ENCODE measurements at regions of chr2 and their contacts with region 1.

Region 1: GRCh38 chr2:108069515-108070310 is 83.4 kb downstream of the SLC5A7 start:
- DNase-seq: peak; percentile 8
- H3K4me3 Mint-ChIP-seq: no peak overlapping the region
- H3K27ac Mint-ChIP-seq: no peak overlapping the region
- H3K4me1 Mint-ChIP-seq: no peaks in the 10 kb centered on the region
- H3K27me3 Mint-ChIP-seq: peaks cover 19% of the 10 kb centered on the region
- CTCF ChIP-seq: peak; percentile 19

Region 2: DNA sequence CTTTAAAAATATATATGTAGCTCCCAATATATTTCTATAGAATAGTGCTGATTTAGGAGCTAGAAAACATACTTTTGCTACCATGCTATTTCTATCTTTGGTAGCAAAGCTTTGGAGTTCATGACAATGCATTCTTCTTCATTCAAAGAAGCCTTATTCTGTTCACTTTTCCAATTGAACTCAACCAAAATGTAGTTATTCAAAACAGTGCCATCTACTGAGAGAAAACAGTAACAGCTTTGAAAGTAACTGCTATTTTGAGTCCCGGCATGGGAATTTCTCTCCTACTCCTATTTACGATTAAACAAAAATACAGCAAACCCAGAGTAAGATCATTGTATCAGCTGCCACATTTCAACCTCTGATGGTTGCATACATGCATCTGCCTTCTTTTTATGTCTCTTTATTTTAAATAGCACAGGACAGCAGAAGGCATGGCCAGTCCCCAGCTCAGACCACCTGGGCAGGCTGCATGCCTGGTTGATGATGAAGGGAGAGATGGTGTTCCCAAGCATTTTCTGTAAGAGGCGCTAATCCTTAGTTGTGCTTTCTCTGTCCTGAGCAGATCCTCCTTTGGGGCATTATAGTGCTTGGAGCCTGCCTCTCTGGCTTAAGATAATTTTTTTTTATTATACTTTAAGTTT is 100.4 kb after region 1 on chr2:
- CTCF ChIA-PET with region 1: no interaction called
- intact Hi-C with region 1: loop called (anchors 10 kb)
- DNase-seq: no peak
- H3K4me3 Mint-ChIP-seq: no peak overlapping the region
- H3K27ac Mint-ChIP-seq: no peak overlapping the region
- H3K4me1 Mint-ChIP-seq: no peaks in the 10 kb centered on the region
- H3K27me3 Mint-ChIP-seq: peaks cover 40% of the 10 kb centered on the region
- CTCF ChIP-seq: peak; percentile 37